Right cardiac atrium (tissue), 5 donors: ENCODE measurements at regions of chr11 and their contacts with region 1.

Region 1: DNA sequence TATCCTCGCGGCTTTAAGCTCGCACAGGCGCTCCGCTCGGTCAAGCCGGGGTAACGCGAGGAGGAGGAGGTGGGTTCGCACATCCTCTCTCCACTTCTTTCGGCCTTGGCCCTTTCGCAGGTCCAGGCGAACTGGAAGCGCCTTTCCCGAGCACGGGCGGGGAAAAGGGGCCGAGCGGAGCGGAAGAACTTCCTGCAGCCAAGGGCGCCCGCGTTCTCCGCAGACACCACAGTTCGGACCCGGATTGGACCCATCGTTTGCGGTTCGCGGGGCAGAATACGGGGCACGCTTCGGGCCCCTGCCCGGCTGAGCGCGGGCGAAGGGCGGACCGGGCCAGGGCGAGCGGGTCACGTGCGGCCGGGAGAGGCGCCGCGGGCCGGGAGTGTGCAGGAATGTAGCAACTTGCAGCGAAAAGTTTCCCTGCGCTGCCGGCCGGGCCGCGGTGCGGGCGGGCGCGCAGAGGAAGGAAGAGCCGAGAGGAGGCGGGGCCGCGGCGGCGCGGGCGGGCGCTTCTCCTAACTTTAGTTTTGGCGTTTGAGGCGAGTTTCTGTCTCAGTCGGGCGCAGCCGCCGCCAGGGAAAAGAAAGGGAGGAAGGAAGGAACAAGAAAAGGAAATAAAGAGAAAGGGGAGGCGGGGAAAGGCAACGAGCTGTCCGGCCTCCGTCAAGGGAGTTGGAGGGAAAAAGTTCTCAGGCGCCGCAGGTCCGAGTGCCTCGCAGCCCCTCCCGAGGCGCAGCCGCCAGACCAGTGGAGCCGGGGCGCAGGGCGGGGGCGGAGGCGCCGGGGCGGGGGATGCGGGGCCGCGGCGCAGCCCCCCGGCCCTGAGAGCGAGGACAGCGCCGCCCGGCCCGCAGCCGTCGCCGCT is at the start of gene YAP1:
- DNase-seq: peak; percentile 92 to 96 (median 96)
- ATAC-seq: peak; percentile 93 to 94
- H3K4me3 ChIP-seq: peak within 1 kb of the TSS; percentile 99
- H3K27ac ChIP-seq: peak within 1 kb of the TSS; percentile 97
- H3K4me1 ChIP-seq: no peaks in the 10 kb centered on the region
- H3K27me3 ChIP-seq: no peaks in the 10 kb centered on the region
- total RNA-seq, gene YAP1: 97.4 to 112 (median 106) TPM

Region 2: GRCh38 chr11:102036757-102037156 is 73.4 kb before region 1 on chr11:
- intact Hi-C with region 1: no loop called
- DNase-seq: no peak
- ATAC-seq: no peak
- H3K4me3 ChIP-seq: no peak overlapping the region
- H3K27ac ChIP-seq: no peak overlapping the region
- H3K4me1 ChIP-seq: no peaks in the 10 kb centered on the region
- H3K27me3 ChIP-seq: no peaks in the 10 kb centered on the region

Region 3: DNA sequence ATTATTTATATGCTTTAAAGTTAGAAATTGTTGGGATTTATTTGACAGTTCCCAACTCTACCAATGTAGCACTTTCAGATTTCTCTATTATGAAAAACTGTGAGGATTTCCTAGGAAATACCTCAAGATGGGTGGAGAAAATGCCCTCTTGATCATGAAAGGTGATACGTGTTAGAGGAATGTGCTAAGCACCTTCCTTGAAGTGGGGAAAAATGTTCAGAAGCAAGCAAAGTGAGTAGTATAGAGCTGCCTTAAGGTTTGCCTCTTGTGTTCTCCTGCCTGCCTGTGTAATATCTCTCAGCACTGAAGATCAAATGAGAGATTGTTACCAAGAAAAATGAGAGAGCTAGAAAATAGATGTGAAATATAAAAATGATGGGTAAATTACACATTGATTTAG is 58.4 kb after region 1 on chr11:
- intact Hi-C with region 1: loop called in 1 of 4 experiments (anchors 10 kb)
- DNase-seq: no peak
- ATAC-seq: no peak
- H3K4me3 ChIP-seq: no peak overlapping the region
- H3K27ac ChIP-seq: no peak overlapping the region
- H3K4me1 ChIP-seq: no peaks in the 10 kb centered on the region
- H3K27me3 ChIP-seq: no peaks in the 10 kb centered on the region

Region 4: DNA sequence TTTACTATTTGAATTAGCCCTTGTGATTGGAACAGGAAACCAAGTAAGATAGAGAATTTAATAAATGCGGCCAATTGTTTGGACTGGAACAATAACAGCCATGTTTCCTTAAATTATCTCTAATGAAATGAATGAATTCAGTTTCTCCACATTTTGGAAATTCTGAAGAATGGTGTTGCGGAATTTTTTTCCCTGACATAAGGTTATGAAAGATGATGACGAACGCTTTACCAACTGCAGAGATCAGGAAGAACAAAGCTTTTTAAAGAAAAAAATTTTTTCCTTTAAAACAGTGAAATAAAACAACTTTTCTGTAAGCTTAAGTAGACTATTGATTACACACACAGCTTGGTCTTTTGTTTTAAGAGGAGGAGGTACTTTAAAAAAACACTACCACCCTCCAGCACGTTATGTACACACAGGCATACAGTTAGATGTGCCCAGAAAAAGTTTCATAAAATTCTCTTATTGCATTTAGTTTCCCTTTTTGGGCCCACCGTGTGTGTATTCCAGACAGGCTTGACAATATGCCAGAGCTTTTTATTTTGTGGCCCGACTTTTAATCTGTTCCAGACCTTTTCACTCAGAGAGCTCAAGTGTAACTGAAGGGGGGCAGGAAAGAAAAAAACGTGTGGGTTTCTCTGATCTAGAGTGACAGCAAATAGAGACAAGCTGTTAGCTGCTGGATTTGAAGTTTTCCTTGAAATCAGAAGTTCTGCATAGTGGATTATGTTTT is 77.5 kb after region 1 on chr11:
- intact Hi-C with region 1: loop called in 1 of 4 experiments (anchors 10 kb)
- DNase-seq: no peak
- ATAC-seq: peak in 1 of 2 donors; percentile 51
- H3K4me3 ChIP-seq: no peak overlapping the region
- H3K27ac ChIP-seq: no peak overlapping the region
- H3K4me1 ChIP-seq: peaks cover 2% of the 10 kb centered on the region
- H3K27me3 ChIP-seq: no peaks in the 10 kb centered on the region

Region 5: GRCh38 chr11:102225689-102226568 is 115.8 kb after region 1 on chr11:
- intact Hi-C with region 1: loop called in 1 of 4 experiments (anchors 10 kb)
- DNase-seq: no peak
- ATAC-seq: no peak
- H3K4me3 ChIP-seq: no peak overlapping the region
- H3K27ac ChIP-seq: no peak overlapping the region
- H3K4me1 ChIP-seq: peaks cover 4% of the 10 kb centered on the region
- H3K27me3 ChIP-seq: no peaks in the 10 kb centered on the region

Region 6: DNA sequence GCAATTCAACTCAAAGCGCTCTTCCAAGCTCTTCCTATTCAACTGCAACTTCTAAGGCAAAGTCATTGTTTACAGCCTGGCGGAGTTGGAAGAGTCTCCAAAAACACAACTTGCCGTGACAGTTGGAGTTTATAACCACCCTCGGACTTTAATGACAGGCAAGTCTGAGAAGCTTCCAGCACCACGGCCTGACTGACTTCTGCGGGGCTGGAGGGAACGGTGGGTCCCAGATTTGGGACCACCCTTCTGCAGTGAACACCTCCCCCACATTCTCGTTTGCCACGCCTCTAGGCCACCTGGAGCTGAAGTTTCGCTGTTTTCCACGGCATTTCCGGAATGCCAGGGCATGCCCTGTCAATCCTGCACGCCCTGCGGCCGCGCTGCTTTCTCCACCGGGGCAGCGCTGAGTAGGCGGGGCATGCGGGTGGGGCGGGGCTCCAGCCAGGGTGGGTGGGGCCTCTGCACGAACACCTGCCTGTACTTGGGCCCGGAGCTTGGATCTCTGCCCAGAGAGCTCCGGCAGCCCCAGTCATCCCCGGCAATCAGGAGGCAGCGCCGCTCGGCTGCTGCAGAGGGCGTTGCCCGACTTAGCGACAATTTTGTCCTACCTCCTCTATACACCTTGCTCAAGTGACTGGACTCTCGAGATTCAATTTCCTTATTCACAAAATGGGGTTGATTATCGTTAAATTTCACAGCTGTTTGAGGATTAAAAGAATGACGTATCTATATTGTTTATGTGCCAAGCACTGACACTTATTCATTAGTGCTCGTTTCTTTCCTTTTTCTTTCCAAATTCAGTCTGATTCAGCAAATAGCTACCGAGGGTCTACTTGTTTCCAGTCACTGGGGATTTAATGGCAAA is 158.4 kb after region 1 on chr11:
- intact Hi-C with region 1: loop called in 3 of 4 experiments (anchors 5 to 10 kb)
- DNase-seq: peak; percentile 74 to 91 (median 88)
- ATAC-seq: peak; percentile 95 to 96
- H3K4me3 ChIP-seq: peak overlapping the region; percentile 38
- H3K27ac ChIP-seq: no peak overlapping the region
- H3K4me1 ChIP-seq: no peaks in the 10 kb centered on the region
- H3K27me3 ChIP-seq: no peaks in the 10 kb centered on the region